ENCODE measurements at regions of chr7 and their contacts with region 1.

Region 1: GRCh38 chr7:69782917-69783684 is 184.8 kb downstream of the AUTS2 start:
- DNase-seq: peak; percentile 33
- H3K4me3 ChIP-seq: no peak overlapping the region
- H3K27ac ChIP-seq: no peak overlapping the region
- H3K4me1 ChIP-seq: no peaks in the 10 kb centered on the region
- H3K27me3 ChIP-seq: no peaks in the 10 kb centered on the region
- CTCF ChIP-seq: no peak
- POLR2A ChIP-seq: no peak

Region 2: DNA sequence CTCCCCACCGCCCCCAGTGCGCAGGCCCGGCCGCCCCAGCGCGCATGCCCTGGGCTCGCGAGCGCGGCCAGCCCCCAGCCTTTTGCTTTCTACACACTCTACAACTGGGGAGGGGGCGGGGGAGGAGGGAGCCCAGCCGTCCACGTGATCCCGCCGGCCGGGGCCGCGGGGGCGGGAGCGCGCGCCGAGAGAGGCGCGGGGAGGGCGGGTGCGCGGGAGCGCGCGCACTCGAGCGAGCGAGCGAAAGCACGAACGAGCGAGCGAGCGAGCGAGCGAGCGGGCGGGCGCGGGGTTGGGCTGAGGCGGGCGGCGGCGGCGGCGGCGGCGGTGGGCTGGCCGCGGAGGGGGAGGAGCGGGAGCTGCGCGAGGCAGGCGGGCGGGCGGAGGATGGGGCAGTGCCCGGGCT is 185.0 kb before region 1 on chr7 and contains the start of gene AUTS2:
- intact Hi-C with region 1: loop called (anchors 10 kb)
- DNase-seq: peak; percentile 88
- H3K4me3 ChIP-seq: peak within 1 kb of the TSS; percentile 75 to 86
- H3K27ac ChIP-seq: peak within 1 kb of the TSS; percentile 93 to 94
- H3K4me1 ChIP-seq: no peaks in the 10 kb centered on the region
- H3K27me3 ChIP-seq: no peaks in the 10 kb centered on the region
- CTCF ChIP-seq: no peak
- POLR2A ChIP-seq: no peak
- total RNA-seq, gene AUTS2: 25.0 to 55.2 TPM

Measured in prostate gland (tissue), 2 donors.